ENCODE measurements at regions of chr4 and their contacts with region 1.

Region 1: GRCh38 chr4:98260579-98261290 is 449 bp upstream of the RAP1GDS1 start:
- DNase-seq: peak; percentile 83
- ATAC-seq: peak; percentile 91
- H3K4me3 ChIP-seq: peak overlapping the region; percentile 98
- H3K27ac ChIP-seq: peak overlapping the region; percentile 91
- H3K4me1 ChIP-seq: no peaks in the 10 kb centered on the region
- H3K27me3 ChIP-seq: no peaks in the 10 kb centered on the region
- CTCF ChIP-seq: no peak
- EP300 ChIP-seq: no peak
- POLR2A ChIP-seq: peak; percentile 89
- RAD21 ChIP-seq: no peak

Region 2: DNA sequence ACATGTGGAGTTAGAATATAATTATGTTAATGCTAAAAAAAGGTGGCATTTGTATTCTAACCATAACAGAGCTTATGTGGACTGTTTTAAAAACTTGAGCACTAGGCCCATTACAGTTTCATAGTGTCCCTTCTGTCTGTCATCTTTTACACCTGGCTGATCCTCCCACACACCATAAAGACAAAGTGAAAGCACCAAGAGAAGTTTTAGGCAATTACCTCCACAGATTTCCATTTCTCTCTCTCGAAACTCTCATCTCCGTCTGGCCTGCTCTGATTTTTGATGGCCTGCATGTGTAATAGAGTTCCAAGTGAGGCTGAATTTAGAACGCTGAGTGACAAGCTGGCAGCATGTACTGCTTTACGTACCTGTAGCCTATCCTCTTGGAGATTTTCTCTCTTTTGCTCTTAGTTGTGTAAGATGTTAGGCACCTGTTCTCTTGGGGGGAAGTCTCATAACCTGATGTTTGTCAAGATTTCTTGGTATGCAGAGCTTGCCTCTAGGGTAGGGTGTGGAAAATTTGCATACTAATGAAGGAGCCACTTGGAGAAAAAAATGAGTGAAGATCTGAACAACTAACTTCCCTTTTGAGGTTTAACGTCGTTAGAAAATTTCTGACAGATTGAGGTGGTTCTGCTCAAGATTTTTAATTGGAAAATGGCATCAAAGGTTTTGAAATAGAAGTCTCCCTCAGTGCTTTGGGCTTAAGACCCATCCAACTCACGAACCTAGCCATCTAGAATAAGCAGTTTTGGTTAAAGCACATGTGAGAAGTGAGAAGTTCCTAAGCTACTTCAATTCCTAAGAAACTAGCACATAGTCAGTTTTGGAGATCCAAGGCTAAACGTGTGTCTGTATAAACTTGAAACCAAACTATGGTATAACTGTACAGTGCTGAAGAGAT is 57.2 kb before region 1 on chr4:
- CTCF ChIA-PET with region 1: no interaction called
- POLR2A ChIA-PET with region 1: interaction called, 3 read pairs
- RAD21 ChIA-PET with region 1: no interaction called
- SMC1A ChIA-PET with region 1: interaction called, 3 read pairs
- in situ Hi-C with region 1: no loop called
- intact Hi-C with region 1: loop called (anchors 2 kb)
- DNase-seq: peak; percentile 30
- ATAC-seq: peak; percentile 81
- H3K4me3 ChIP-seq: peak overlapping the region; percentile 42
- H3K27ac ChIP-seq: peak overlapping the region; percentile 88
- H3K4me1 ChIP-seq: peaks cover 21% of the 10 kb centered on the region
- H3K27me3 ChIP-seq: no peaks in the 10 kb centered on the region
- CTCF ChIP-seq: no peak
- EP300 ChIP-seq: 0 out of 4 replicates have a peak, but pooled peaks of 1 of the 2 experiments have one; percentile 16
- POLR2A ChIP-seq: no peak
- RAD21 ChIP-seq: no peak

Region 3: GRCh38 chr4:98341309-98341708 is 80.6 kb after region 1 on chr4:
- CTCF ChIA-PET with region 1: no interaction called
- POLR2A ChIA-PET with region 1: no interaction called
- RAD21 ChIA-PET with region 1: no interaction called
- SMC1A ChIA-PET with region 1: no interaction called
- in situ Hi-C with region 1: no loop called
- intact Hi-C with region 1: no loop called
- DNase-seq: no peak
- ATAC-seq: no peak
- H3K4me3 ChIP-seq: no peak overlapping the region
- H3K27ac ChIP-seq: no peak overlapping the region
- H3K4me1 ChIP-seq: no peaks in the 10 kb centered on the region
- H3K27me3 ChIP-seq: no peaks in the 10 kb centered on the region
- CTCF ChIP-seq: no peak
- EP300 ChIP-seq: no peak
- POLR2A ChIP-seq: no peak
- RAD21 ChIP-seq: no peak

Region 4: DNA sequence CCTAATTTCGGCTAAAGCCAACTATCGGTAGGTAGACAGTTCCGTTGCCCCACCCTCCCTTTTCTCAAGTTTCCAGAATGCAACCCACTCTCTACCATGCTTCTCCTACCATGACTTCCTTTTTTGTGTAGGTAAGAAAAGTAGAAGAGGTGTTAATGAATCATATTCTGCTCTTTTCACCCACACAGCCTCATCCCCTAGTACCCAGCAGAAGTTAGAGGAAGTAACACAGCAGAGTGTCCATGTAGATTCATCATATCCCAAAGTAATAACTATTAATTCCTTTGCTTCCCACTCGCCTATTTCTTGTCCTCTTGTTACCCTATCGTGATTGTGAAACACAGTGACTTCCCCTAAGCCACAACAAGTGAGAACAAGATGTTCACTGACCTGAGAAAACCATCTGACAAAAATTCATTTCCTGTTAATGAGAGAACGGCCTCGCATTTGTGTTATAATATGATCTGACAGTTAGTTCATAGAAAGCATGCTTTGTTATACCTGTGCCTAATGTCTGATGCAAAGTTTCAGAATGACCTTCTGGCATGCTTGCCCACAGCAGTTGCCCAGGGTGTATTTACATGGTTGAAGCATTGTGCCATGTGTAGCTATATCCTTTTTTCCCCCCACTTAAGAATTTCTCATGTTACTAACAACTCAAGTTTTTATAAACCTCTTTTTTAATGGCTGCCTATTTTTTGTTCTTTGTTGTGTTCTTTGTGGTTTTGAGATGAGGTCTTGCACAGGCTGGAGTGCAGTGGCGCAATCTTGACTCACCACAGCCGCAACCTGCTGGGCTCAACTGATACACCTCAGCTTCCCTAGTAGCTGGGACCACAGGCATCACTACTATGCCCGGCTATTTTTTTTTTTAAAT is 186.0 kb after region 1 on chr4:
- CTCF ChIA-PET with region 1: interaction called, 3 read pairs
- POLR2A ChIA-PET with region 1: interaction called, 3 read pairs
- RAD21 ChIA-PET with region 1: interaction called, 3 read pairs
- SMC1A ChIA-PET with region 1: no interaction called
- in situ Hi-C with region 1: no loop called
- intact Hi-C with region 1: loop called (anchors 5 kb)
- DNase-seq: peak; percentile 61
- ATAC-seq: peak; percentile 93
- H3K4me3 ChIP-seq: no peak overlapping the region
- H3K27ac ChIP-seq: peak overlapping the region; percentile 36
- H3K4me1 ChIP-seq: peaks cover 17% of the 10 kb centered on the region
- H3K27me3 ChIP-seq: no peaks in the 10 kb centered on the region
- CTCF ChIP-seq: no peak
- EP300 ChIP-seq: peak in 1 of 2 experiments; percentile 68; a peak in 2 of 4 replicates
- POLR2A ChIP-seq: no peak
- RAD21 ChIP-seq: no peak

Region 5: DNA sequence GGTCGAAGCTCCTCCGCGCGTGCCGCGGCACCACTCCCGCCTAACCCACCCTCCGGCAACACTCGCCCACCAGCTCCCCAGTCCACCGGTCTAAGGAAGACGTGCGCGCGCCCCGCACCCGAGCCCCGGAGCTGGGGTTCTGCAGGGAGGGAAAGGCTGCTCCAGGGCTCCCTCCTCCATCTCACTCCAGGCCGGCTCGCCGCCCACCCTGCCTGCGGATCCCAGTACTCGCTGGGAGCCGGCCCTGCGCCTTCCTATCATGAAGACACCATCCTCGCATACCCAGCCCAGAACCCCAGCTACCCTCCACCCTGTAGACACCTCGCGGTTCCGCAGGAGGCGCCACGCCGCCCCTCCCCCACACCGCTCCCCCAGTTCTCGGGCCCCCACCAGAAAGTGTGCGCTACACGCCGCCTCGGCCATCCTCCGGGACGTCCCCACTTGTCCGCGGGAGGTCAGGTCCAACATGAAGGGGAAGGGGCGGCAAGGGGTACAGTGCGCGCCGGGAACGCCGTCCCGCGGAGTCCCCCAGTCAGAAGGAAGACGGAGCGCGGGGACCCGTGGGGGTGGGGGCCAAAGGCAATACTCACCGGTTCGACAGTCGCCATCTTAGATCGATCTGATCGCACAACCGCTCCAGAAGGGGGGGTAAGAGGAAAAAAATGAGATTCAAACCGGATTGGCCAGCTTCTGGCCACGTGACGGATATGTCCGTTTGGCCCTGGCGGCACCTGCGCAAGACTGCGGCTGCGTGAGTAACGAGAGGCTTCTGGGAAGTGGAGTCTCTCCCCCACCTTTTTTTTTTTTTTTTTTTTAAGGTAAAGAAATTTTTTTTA is 668.0 kb after region 1 on chr4 and contains the start of gene EIF4E:
- CTCF ChIA-PET with region 1: no interaction called
- POLR2A ChIA-PET with region 1: no interaction called
- RAD21 ChIA-PET with region 1: no interaction called
- SMC1A ChIA-PET with region 1: no interaction called
- in situ Hi-C with region 1: loop called (anchors 10 kb)
- intact Hi-C with region 1: loop called (anchors 2 kb)
- DNase-seq: peak; percentile 96
- ATAC-seq: peak; percentile 82
- H3K4me3 ChIP-seq: peak within 1 kb of the TSS; percentile 95
- H3K27ac ChIP-seq: peak within 1 kb of the TSS; percentile 96
- H3K4me1 ChIP-seq: peaks cover 8% of the 10 kb centered on the region
- H3K27me3 ChIP-seq: no peaks in the 10 kb centered on the region
- CTCF ChIP-seq: peak; percentile 20 to 38 (median 27); a peak in 5 of 6 replicates
- EP300 ChIP-seq: 0 out of 4 replicates have a peak, but pooled peaks of 1 of the 2 experiments have one; percentile 10
- POLR2A ChIP-seq: peak; percentile 91
- RAD21 ChIP-seq: no peak
- polyA plus RNA-seq, gene EIF4E: 167 to 372 TPM